Prostate gland (tissue), 2 donors: ENCODE measurements at regions of chr2 and their contacts with region 1.

Region 1: GRCh38 chr2:186589612-186590349 is at the start of gene ITGAV:
- DNase-seq: peak; percentile 92
- H3K4me3 ChIP-seq: peak within 1 kb of the TSS; percentile 76 to 83
- H3K27ac ChIP-seq: peak within 1 kb of the TSS; percentile 95 to 96
- H3K4me1 ChIP-seq: no peaks in the 10 kb centered on the region
- H3K27me3 ChIP-seq: no peaks in the 10 kb centered on the region
- CTCF ChIP-seq: no peak
- POLR2A ChIP-seq: peak; percentile 93
- total RNA-seq, gene ITGAV: 47.0 to 84.8 TPM

Region 2: GRCh38 chr2:185990861-185991525 is 598.8 kb before region 1 on chr2:
- intact Hi-C with region 1: no loop called
- DNase-seq: no peak
- H3K4me3 ChIP-seq: no peak overlapping the region
- H3K27ac ChIP-seq: no peak overlapping the region
- H3K4me1 ChIP-seq: no peaks in the 10 kb centered on the region
- H3K27me3 ChIP-seq: no peaks in the 10 kb centered on the region
- CTCF ChIP-seq: no peak
- POLR2A ChIP-seq: no peak

Region 3: DNA sequence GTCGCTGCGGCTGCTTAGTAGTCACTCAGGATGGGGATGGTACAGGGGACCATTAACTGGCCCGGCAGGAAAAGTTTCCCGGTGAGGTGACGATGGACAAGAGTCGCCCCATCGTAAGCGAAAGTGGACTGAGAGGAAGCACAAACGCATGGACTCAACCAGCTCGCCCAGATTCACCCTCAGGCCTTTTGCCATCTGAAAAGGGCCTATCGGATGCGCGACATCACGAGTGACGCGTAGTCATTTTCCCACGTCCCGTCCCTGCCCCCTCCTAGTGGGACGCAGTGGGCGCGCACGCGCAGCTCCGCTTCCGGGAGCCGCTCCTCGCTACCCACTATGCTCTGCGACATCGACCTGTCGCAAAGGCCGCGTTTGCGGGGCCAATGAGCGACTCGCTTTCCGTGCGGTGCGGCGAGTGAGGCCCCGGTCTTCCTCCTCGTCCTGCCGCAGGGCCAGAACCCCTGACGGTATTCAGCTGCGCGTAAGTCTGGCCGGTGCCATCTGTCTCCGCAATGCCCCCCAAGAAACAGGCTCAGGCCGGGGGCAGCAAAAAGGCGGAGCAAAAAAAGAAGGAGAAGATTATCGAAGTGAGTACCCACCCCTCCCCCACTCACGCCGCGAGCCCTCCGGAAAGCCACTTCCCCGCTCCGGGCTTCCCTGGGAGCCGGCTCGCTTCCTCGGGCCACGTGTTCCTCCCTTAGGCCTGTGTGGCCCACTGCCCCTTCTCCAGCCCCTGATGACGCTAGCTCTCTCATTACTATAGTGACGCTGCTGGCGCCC is 103.7 kb before region 1 on chr2 and contains the start of gene ZC3H15:
- intact Hi-C with region 1: loop called (anchors 5 kb)
- DNase-seq: peak; percentile 95
- H3K4me3 ChIP-seq: peak within 1 kb of the TSS; percentile 84 to 91
- H3K27ac ChIP-seq: peak within 1 kb of the TSS; percentile 91 to 95
- H3K4me1 ChIP-seq: no peaks in the 10 kb centered on the region
- H3K27me3 ChIP-seq: no peaks in the 10 kb centered on the region
- CTCF ChIP-seq: peak in 2 of 4 experiments; percentile 22 to 35
- POLR2A ChIP-seq: peak; percentile 87
- total RNA-seq, gene ZC3H15: 44.6 to 45.3 TPM

Region 4: DNA sequence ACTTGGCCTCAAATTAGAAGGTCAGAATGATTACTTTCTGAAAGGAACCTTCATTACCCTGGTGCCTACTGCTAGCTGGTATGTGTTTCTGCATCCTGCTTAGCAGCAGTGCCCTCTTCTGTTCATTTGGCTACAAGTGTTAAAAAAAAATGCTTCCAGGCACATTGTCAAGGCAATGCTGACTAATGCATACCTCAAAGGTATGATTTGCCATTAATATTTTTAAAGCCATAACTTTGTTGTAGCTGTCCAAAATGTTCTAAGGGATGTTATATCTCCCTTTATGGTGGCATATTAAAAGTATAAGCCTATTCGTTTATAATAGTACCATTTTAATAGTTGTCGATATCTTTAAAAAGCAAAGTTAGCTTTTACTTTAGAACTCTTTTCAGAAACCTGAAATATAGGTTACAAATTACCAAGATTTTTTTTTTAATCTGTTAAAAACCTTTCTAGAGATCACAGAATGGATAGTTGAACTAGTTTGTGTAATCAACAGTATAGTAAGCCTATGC is 52.1 kb after region 1 on chr2:
- intact Hi-C with region 1: loop called (anchors 5 kb)
- DNase-seq: peak; percentile 51
- H3K4me3 ChIP-seq: no peak overlapping the region
- H3K27ac ChIP-seq: no peak overlapping the region
- H3K4me1 ChIP-seq: no peaks in the 10 kb centered on the region
- H3K27me3 ChIP-seq: no peaks in the 10 kb centered on the region
- CTCF ChIP-seq: peak; percentile 15 to 76 (median 60)
- POLR2A ChIP-seq: no peak

Region 5: GRCh38 chr2:186702501-186702900 is 112.7 kb after region 1 on chr2:
- intact Hi-C with region 1: no loop called
- DNase-seq: no peak
- H3K4me3 ChIP-seq: no peak overlapping the region
- H3K27ac ChIP-seq: no peak overlapping the region
- H3K4me1 ChIP-seq: no peaks in the 10 kb centered on the region
- H3K27me3 ChIP-seq: no peaks in the 10 kb centered on the region
- CTCF ChIP-seq: no peak
- POLR2A ChIP-seq: no peak